Endothelial cell of umbilical vein (primary cell): ENCODE measurements at regions of chr3 and their contacts with region 1.

Region 1: GRCh38 chr3:87350364-87351199 is 74.2 kb upstream of the POU1F1 start:
- DNase-seq: peak; percentile 67
- H3K4me3 ChIP-seq: no peak overlapping the region
- H3K27ac ChIP-seq: no peak overlapping the region
- H3K4me1 ChIP-seq: no peaks in the 10 kb centered on the region
- H3K27me3 ChIP-seq: no peaks in the 10 kb centered on the region
- CTCF ChIP-seq: peak; percentile 71 to 78
- POLR2A ChIP-seq: no peak

Region 2: GRCh38 chr3:87298111-87298718 is 52.4 kb before region 1 on chr3:
- CTCF ChIA-PET with region 1: interaction called, 59 read pairs
- POLR2A ChIA-PET with region 1: no interaction called
- dilution Hi-C with region 1: no loop called
- intact Hi-C with region 1: loop called (anchors 1 kb)
- DNase-seq: peak; percentile 59
- H3K4me3 ChIP-seq: no peak overlapping the region
- H3K27ac ChIP-seq: no peak overlapping the region
- H3K4me1 ChIP-seq: no peaks in the 10 kb centered on the region
- H3K27me3 ChIP-seq: no peaks in the 10 kb centered on the region
- CTCF ChIP-seq: peak; percentile 25 to 35
- POLR2A ChIP-seq: no peak

Region 3: GRCh38 chr3:87318617-87319021 is 32.0 kb before region 1 on chr3:
- CTCF ChIA-PET with region 1: interaction called, 18 read pairs
- POLR2A ChIA-PET with region 1: no interaction called
- dilution Hi-C with region 1: no loop called
- intact Hi-C with region 1: no loop called
- DNase-seq: peak; percentile 80
- H3K4me3 ChIP-seq: no peak overlapping the region
- H3K27ac ChIP-seq: no peak overlapping the region
- H3K4me1 ChIP-seq: peaks cover 8% of the 10 kb centered on the region
- H3K27me3 ChIP-seq: no peaks in the 10 kb centered on the region
- CTCF ChIP-seq: no peak
- POLR2A ChIP-seq: no peak

Region 4: DNA sequence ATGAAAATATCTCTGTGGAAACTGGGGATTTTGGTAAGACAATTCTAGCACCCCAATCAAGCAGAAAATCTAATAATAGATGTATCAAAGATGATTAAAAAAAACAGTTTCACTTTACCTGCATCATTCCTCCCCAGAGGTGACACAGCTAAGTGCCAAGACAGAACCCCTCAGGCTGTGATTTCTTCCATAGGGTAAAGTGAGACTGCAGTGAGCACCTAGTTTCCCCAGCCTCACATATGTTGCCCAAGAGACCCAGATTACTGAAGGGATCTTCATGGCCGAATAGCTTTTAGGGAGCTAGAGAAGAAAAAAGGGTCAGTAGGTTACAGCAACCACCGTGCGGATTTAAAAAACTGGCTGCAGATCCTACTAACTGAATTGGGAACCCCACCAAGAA is 30.2 kb after region 1 on chr3:
- CTCF ChIA-PET with region 1: interaction called, 10 read pairs
- POLR2A ChIA-PET with region 1: no interaction called
- dilution Hi-C with region 1: no loop called
- intact Hi-C with region 1: no loop called
- DNase-seq: no peak
- H3K4me3 ChIP-seq: no peak overlapping the region
- H3K27ac ChIP-seq: no peak overlapping the region
- H3K4me1 ChIP-seq: no peaks in the 10 kb centered on the region
- H3K27me3 ChIP-seq: no peaks in the 10 kb centered on the region
- CTCF ChIP-seq: no peak
- POLR2A ChIP-seq: no peak

Region 5: DNA sequence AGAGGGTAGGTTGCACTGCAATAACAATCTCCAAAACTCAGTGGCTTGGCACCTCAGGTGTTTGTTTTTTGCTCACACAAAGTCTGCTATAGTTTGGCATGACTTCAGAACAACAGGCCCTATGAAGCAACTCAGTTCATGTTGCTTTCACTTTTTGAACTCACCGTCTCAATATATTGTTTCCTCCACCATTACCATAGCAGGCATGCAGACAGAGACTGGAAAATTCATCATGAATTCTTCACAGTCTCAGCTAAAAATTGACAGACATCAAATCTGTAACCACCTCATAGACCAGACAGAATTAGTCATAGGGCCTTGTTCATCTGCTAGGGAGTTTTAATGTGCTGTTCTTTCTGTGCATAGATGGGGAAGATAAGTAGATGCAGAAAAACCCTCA is 87.2 kb after region 1 on chr3:
- CTCF ChIA-PET with region 1: interaction called, 18 read pairs
- POLR2A ChIA-PET with region 1: no interaction called
- dilution Hi-C with region 1: no loop called
- intact Hi-C with region 1: loop called (anchors 5 kb)
- DNase-seq: peak; percentile 30
- H3K4me3 ChIP-seq: no peak overlapping the region
- H3K27ac ChIP-seq: no peak overlapping the region
- H3K4me1 ChIP-seq: no peaks in the 10 kb centered on the region
- H3K27me3 ChIP-seq: no peaks in the 10 kb centered on the region
- CTCF ChIP-seq: no peak
- POLR2A ChIP-seq: no peak

Region 6: DNA sequence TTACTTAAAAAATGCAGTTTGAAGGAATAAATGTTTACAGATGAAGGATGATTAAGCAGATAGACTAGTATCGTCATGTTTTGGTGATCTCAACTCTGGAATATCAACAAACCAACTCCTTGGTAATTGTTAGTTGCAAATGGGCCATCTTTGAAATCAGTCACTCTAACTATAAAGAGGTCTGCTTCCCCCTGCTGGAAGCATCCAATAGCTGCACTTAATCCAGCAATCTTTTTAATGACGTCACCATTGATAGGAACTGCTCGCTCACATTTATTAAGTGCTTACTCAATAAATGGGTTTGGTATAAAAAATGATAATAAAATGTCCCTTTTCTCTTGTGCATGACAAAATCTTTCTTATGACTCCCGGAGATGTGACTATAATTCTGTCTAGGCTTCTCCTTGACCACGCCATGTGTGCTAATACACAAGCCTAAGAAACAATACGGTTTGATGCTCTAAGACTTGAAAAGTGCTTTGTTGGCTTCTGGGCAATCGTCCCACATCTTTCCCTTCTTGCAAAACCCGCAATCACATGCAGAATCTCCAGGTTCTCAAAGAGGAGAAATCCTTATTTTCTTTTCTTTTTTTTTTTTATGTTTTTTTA is 153.4 kb after region 1 on chr3:
- CTCF ChIA-PET with region 1: interaction called, 110 read pairs
- POLR2A ChIA-PET with region 1: no interaction called
- dilution Hi-C with region 1: no loop called
- intact Hi-C with region 1: loop called (anchors 1 kb)
- DNase-seq: peak; percentile 85
- H3K4me3 ChIP-seq: no peak overlapping the region
- H3K27ac ChIP-seq: no peak overlapping the region
- H3K4me1 ChIP-seq: no peaks in the 10 kb centered on the region
- H3K27me3 ChIP-seq: peaks cover 0 to 2% of the 10 kb centered on the region in 2 experiments
- CTCF ChIP-seq: peak; percentile 66 to 67
- POLR2A ChIP-seq: no peak

Region 7: GRCh38 chr3:88362428-88362827 is 1011.8 kb after region 1 on chr3:
- CTCF ChIA-PET with region 1: no interaction called
- POLR2A ChIA-PET with region 1: no interaction called
- dilution Hi-C with region 1: no loop called
- intact Hi-C with region 1: no loop called
- DNase-seq: no peak
- H3K4me3 ChIP-seq: no peak overlapping the region
- H3K27ac ChIP-seq: no peak overlapping the region
- H3K4me1 ChIP-seq: no peaks in the 10 kb centered on the region
- H3K27me3 ChIP-seq: no peaks in the 10 kb centered on the region
- CTCF ChIP-seq: no peak
- POLR2A ChIP-seq: no peak